Activated CD4-positive, alpha-beta memory T cell treated with anti-CD3 and anti-CD28 coated beads for 36 hours (primary cell): ENCODE measurements at regions of chr3 and their contacts with region 1.

Region 1: GRCh38 chr3:133661454-133662277 is at the start of gene TOPBP1:
- DNase-seq: peak; percentile 94
- H3K4me3 Mint-ChIP-seq: peak within 1 kb of the TSS; percentile 98
- H3K27ac Mint-ChIP-seq: peak within 1 kb of the TSS; percentile 98
- H3K4me1 Mint-ChIP-seq: peaks cover 32% of the 10 kb centered on the region
- H3K27me3 Mint-ChIP-seq: no peaks in the 10 kb centered on the region
- total RNA-seq, gene TOPBP1: 73.9 to 79.1 TPM

Region 2: DNA sequence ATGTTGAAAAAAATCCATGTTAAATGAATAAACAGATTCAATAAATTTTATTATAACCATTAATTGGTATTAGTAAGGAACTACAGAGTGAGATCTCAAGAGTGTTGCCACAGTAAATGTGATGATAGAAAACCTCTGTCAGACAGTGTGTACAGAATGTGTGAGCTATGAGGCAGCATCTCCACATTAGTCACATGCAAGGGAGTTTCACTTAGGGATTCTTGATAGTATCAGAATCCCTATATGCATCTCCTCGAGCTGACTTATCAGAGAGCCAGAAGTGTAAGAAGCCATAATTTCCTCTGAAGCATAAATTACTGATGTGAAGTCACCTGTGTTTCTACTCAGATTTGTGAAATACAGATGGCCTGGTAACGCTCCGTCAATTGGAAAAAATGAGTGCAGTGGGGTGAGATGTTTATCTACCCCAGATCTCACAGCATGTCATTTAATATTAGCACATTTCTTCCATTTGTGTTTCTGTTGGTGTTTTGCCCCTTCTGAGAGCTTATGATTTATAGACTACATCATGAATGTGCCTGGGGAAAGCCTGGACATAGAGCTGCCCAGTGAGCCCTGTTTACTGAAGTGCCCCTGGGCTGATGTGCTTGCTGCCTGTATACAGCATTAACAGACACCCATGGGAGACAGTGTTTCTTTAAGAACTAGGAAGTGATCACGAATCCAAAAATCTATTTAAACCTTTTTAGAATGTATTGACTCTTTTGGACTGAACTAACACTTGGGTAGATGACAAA is 1889.2 kb before region 1 on chr3:
- CTCF ChIA-PET with region 1: no interaction called
- POLR2A ChIA-PET with region 1: no interaction called
- intact Hi-C with region 1: no loop called
- DNase-seq: no peak
- H3K4me3 Mint-ChIP-seq: no peak overlapping the region
- H3K27ac Mint-ChIP-seq: no peak overlapping the region
- H3K4me1 Mint-ChIP-seq: no peaks in the 10 kb centered on the region
- H3K27me3 Mint-ChIP-seq: peaks cover 5% of the 10 kb centered on the region

Region 3: DNA sequence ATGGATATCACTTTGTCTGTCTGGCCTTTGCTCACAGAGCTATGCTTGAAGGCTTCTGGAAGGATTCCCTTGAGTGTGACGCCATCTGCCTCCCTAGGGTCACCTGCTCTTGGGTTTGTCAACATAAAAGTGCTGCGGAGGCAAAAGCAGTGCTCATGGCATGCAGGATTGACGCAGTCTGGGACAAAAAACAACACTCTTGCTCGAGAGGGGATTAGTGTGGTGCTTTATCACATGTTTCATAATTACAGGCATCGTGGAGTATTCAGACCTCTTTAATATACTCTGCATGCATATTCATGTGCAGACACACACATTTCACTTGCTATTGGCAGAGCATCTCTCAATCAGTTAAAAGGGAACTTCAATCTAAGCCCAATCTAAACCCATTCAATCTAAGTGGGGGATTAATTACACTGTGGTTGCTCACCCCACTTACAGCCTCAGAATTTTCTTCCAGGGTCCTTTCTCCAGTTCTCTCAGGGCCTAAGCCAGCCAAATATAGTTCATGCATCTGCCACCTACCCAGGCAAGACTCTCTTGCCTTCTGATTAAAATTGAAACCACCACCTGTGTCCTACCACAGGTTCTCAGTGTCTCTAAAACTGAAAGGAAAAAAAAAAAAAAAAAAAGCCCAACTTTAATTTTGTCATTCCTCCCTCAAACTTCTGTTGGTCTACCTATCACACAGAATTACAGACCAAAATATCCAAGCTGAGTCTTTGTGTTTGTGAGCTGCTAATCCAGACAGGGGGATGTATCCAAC is 186.2 kb before region 1 on chr3:
- CTCF ChIA-PET with region 1: no interaction called
- POLR2A ChIA-PET with region 1: no interaction called
- intact Hi-C with region 1: loop called (anchors 5 kb)
- DNase-seq: peak; percentile 38
- H3K4me3 Mint-ChIP-seq: no peak overlapping the region
- H3K27ac Mint-ChIP-seq: peak overlapping the region; percentile 57
- H3K4me1 Mint-ChIP-seq: peaks cover 38% of the 10 kb centered on the region
- H3K27me3 Mint-ChIP-seq: no peaks in the 10 kb centered on the region

Region 4: DNA sequence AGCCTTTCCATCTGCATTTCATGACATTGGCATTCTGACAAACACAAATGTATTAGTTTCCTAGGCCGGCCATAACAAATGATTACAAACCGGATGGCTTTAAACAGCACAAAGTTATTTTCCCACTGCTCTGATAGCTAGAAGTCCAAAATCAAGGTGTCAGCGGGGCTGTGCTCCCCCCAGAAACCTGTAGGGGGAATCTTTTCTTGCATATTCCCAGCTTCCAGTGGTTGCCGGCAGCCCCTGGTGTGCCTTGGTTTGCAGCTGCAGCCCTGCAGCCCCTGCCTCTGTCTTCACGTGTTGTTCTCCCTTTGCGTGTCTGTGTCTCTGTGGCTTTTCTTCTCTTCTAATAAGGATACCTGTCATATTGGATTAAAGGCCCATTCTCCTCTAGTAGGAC is 167.2 kb before region 1 on chr3:
- CTCF ChIA-PET with region 1: no interaction called
- POLR2A ChIA-PET with region 1: no interaction called
- intact Hi-C with region 1: loop called (anchors 5 kb)
- DNase-seq: peak; percentile 21
- H3K4me3 Mint-ChIP-seq: no peak overlapping the region
- H3K27ac Mint-ChIP-seq: no peak overlapping the region
- H3K4me1 Mint-ChIP-seq: peaks cover 41% of the 10 kb centered on the region
- H3K27me3 Mint-ChIP-seq: no peaks in the 10 kb centered on the region

Region 5: GRCh38 chr3:133633439-133633838 is 28.2 kb before region 1 on chr3:
- CTCF ChIA-PET with region 1: no interaction called
- POLR2A ChIA-PET with region 1: no interaction called
- intact Hi-C with region 1: no loop called
- DNase-seq: no peak
- H3K4me3 Mint-ChIP-seq: no peak overlapping the region
- H3K27ac Mint-ChIP-seq: no peak overlapping the region
- H3K4me1 Mint-ChIP-seq: peaks cover 4% of the 10 kb centered on the region
- H3K27me3 Mint-ChIP-seq: no peaks in the 10 kb centered on the region

Region 6: GRCh38 chr3:133927540-133928066 is 265.9 kb after region 1 on chr3:
- CTCF ChIA-PET with region 1: interaction called, 3 read pairs
- POLR2A ChIA-PET with region 1: no interaction called
- intact Hi-C with region 1: loop called (anchors 1 kb)
- DNase-seq: peak; percentile 72
- H3K4me3 Mint-ChIP-seq: peak overlapping the region; percentile 38
- H3K27ac Mint-ChIP-seq: no peak overlapping the region
- H3K4me1 Mint-ChIP-seq: peaks cover 6% of the 10 kb centered on the region
- H3K27me3 Mint-ChIP-seq: peaks cover 10% of the 10 kb centered on the region

Region 7: DNA sequence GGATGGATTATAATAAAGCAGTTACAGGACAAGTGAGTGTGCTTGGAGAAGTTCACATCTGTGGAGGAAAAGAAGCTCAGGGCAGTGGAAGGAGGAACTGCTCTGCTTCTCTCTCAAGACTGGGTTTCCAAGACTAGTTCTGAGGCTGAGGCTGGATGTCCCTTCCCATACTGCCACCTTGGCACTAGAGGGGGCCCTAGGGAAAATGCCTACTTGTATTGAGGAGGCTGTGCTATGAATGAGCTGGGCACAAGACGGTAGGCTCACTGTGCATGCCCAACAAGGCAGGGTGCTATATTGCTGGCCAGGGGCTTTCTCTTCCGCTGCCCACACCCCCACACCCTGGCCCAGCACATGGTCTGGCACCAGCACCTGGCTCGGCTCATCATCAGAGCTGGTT is 302.9 kb after region 1 on chr3:
- CTCF ChIA-PET with region 1: no interaction called
- POLR2A ChIA-PET with region 1: no interaction called
- intact Hi-C with region 1: no loop called
- DNase-seq: no peak
- H3K4me3 Mint-ChIP-seq: no peak overlapping the region
- H3K27ac Mint-ChIP-seq: no peak overlapping the region
- H3K4me1 Mint-ChIP-seq: no peaks in the 10 kb centered on the region
- H3K27me3 Mint-ChIP-seq: no peaks in the 10 kb centered on the region